ENCODE measurements at regions of chr4 and their contacts with region 1.

Region 1: GRCh38 chr4:77358315-77358928 is 201.4 kb downstream of the CCNG2 start:
- DNase-seq: peak in 3 of 14 experiments; percentile 13 to 22 (median 19)
- ATAC-seq: no peak
- H3K4me3 ChIP-seq: no peak overlapping the region
- H3K4me3 Mint-ChIP-seq: no peak overlapping the region
- H3K27ac ChIP-seq: no peak overlapping the region
- H3K27ac Mint-ChIP-seq: no peak overlapping the region
- H3K4me1 ChIP-seq: no peaks in the 10 kb centered on the region
- H3K4me1 Mint-ChIP-seq: no peaks in the 10 kb centered on the region
- H3K27me3 ChIP-seq: no peaks in the 10 kb centered on the region
- H3K27me3 Mint-ChIP-seq: peaks cover 4% of the 10 kb centered on the region
- CTCF ChIP-seq: peak; percentile 39

Region 2: GRCh38 chr4:76430519-76431388 is 927.7 kb before region 1 on chr4:
- CTCF ChIA-PET with region 1: no interaction called
- POLR2A ChIA-PET with region 1: no interaction called
- intact Hi-C with region 1: loop called in 1 of 2 experiments (anchors 5 kb)
- DNase-seq: peak in 4 of 14 experiments; percentile 3 to 57 (median 40)
- ATAC-seq: no peak
- H3K4me3 ChIP-seq: no peak overlapping the region
- H3K4me3 Mint-ChIP-seq: no peak overlapping the region
- H3K27ac ChIP-seq: no peak overlapping the region
- H3K27ac Mint-ChIP-seq: no peak overlapping the region
- H3K4me1 ChIP-seq: peaks cover 3% of the 10 kb centered on the region
- H3K4me1 Mint-ChIP-seq: no peaks in the 10 kb centered on the region
- H3K27me3 ChIP-seq: peaks cover 2 to 8% of the 10 kb centered on the region in 2 experiments
- H3K27me3 Mint-ChIP-seq: peaks cover 16% of the 10 kb centered on the region
- CTCF ChIP-seq: peak; percentile 79

Region 3: DNA sequence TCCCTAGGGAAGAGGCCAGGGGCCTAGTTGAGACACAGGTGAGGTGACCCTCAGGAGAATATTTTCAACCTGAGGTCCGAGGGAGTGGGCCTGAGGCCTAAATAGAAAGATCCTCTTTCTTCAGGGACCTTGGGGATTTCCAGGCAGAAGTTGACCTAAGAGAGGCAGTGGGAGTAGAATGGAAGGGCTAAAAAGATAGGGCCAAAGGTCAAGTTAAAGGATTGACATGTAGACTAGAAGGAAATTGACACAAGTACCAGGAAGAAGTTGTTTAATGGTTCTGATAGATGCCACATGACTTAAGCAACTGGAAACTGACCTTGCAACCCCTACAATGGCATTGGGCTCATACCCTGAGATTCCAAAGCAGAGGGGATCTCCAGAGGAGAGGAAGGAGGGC is 846.5 kb before region 1 on chr4:
- CTCF ChIA-PET with region 1: no interaction called
- POLR2A ChIA-PET with region 1: no interaction called
- intact Hi-C with region 1: loop called (anchors 2 to 5 kb)
- DNase-seq: no peak
- ATAC-seq: no peak
- H3K4me3 ChIP-seq: no peak overlapping the region
- H3K4me3 Mint-ChIP-seq: no peak overlapping the region
- H3K27ac ChIP-seq: no peak overlapping the region
- H3K27ac Mint-ChIP-seq: no peak overlapping the region
- H3K4me1 ChIP-seq: no peaks in the 10 kb centered on the region
- H3K4me1 Mint-ChIP-seq: no peaks in the 10 kb centered on the region
- H3K27me3 ChIP-seq: peaks cover 0 to 3% of the 10 kb centered on the region in 2 experiments
- H3K27me3 Mint-ChIP-seq: peaks cover 8% of the 10 kb centered on the region
- CTCF ChIP-seq: no peak

Region 4: DNA sequence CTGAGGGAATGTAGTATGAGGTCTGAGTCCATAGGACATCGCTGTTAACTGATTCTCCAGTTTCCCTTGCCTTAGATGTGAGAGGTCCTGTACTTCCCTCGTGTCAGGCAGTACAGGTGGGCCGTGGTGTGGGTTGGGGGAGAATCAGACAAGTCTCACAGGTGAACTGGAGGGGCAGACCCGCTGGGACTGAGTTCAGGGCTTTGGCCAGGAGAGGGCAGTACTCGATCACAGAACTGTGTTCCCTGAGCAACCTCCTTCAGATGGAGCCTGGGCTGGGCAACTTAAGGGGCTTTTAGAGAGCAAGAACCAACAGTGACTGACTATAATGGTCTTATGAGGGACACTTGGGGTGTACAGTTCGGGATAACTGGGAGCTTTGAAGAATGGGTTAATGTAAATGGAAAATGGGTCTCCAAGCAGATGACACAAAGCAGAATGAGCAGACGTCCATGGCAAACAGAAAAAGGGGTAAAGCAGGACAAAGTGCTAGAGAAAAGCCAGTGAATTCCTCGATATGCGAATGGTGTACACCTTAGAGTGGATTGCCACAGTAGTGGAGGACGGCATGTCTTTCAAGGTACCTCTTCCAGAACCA is 117.9 kb before region 1 on chr4:
- CTCF ChIA-PET with region 1: no interaction called
- POLR2A ChIA-PET with region 1: no interaction called
- intact Hi-C with region 1: loop called in 1 of 2 experiments (anchors 2 kb)
- DNase-seq: peak; percentile 18 to 59 (median 38)
- ATAC-seq: peak; percentile 59
- H3K4me3 ChIP-seq: no peak overlapping the region
- H3K4me3 Mint-ChIP-seq: no peak overlapping the region
- H3K27ac ChIP-seq: no peak overlapping the region
- H3K27ac Mint-ChIP-seq: no peak overlapping the region
- H3K4me1 ChIP-seq: no peaks in the 10 kb centered on the region
- H3K4me1 Mint-ChIP-seq: no peaks in the 10 kb centered on the region
- H3K27me3 ChIP-seq: no peaks in the 10 kb centered on the region
- H3K27me3 Mint-ChIP-seq: peaks cover 6% of the 10 kb centered on the region
- CTCF ChIP-seq: peak; percentile 76

Measured in CD4-positive, alpha-beta T cell (primary cell).